ENCODE measurements at regions of chr3 and their contacts with region 1.

Region 1: GRCh38 chr3:124529826-124530571 is 200.3 kb upstream of the UMPS start:
- DNase-seq: no peak
- ATAC-seq: no peak

Region 2: GRCh38 chr3:124768812-124769211 is 238.8 kb after region 1 on chr3:
- intact Hi-C with region 1: no loop called
- DNase-seq: no peak
- ATAC-seq: peak in 1 of 2 donors; percentile 9

Region 3: DNA sequence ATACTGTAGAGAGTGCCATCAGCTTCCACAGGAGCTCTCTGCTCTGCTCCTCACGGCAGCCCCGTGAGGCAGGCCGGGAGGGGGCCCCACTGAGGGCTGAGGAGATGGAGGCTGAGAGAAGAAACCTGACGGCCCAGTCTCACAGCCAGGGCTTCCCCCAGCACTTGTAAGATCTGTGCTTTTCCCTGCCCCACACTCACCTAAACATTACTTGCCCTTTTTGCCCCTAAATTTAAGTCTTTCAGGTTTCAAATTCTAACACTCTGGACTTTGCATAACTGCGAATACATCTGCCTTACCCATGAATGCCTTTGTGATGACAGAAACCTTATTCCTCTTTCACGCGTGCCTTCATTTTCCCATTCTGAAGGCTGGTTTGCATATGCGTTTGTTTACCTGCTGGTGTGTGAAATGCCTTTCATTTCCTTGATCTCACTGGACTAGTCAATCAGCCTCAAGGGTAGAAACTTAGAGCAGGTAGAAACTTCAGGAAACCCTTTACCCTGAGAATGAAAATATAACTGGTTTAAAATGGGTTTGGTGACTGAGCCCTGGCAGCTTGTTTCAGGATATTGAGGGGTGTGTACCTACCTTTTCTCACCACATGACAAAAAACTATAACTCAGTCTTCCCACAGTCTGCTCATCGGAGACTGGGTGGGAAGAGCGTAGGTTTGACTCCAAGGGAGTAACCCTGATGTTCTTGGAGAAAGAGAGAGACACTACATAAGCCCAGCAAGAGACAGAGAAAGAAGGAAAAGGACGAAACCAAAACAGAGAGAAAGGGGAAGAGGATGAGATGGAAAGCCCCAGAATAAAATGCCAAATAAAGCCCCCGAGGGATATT is 662.4 kb after region 1 on chr3:
- intact Hi-C with region 1: loop called in 1 of 2 experiments (anchors 10 kb)
- DNase-seq: no peak
- ATAC-seq: no peak

Measured in left cardiac atrium (tissue), 4 donors.